GM12878 (cell line): ENCODE measurements at regions of chr3 and their contacts with region 1.

Region 1: GRCh38 chr3:111691293-111691909 is 96.3 kb upstream of the ZBED2 start:
- DNase-seq: no peak
- ATAC-seq: peak; percentile 63
- H3K4me3 ChIP-seq: no peak overlapping the region
- H3K27ac ChIP-seq: no peak overlapping the region
- H3K4me1 ChIP-seq: peaks cover 6% of the 10 kb centered on the region; the same call in 1 of the 2 replicates
- H3K27me3 ChIP-seq: no peaks in the 10 kb centered on the region
- CTCF ChIP-seq: peak; percentile 24 to 44 (median 31); a peak in 4 of 6 replicates
- EP300 ChIP-seq: no peak
- POLR2A ChIP-seq: no peak
- RAD21 ChIP-seq: peak; percentile 52

Region 2: GRCh38 chr3:111676211-111677006 is 15.0 kb before region 1 on chr3:
- CTCF ChIA-PET with region 1: interaction called, 15 read pairs
- POLR2A ChIA-PET with region 1: interaction called, 4 read pairs
- RAD21 ChIA-PET with region 1: interaction called, 112 read pairs
- SMC1A ChIA-PET with region 1: interaction called, 29 read pairs
- in situ Hi-C with region 1: no loop called
- intact Hi-C with region 1: no loop called
- DNase-seq: no peak
- ATAC-seq: peak; percentile 38
- H3K4me3 ChIP-seq: peak overlapping the region; percentile 67; the same call in 1 of the 2 replicates
- H3K27ac ChIP-seq: no peak overlapping the region
- H3K4me1 ChIP-seq: peaks cover 17% of the 10 kb centered on the region
- H3K27me3 ChIP-seq: no peaks in the 10 kb centered on the region
- CTCF ChIP-seq: no peak
- EP300 ChIP-seq: no peak
- POLR2A ChIP-seq: no peak
- RAD21 ChIP-seq: no peak

Region 3: GRCh38 chr3:111708157-111708771 is 16.9 kb after region 1 on chr3:
- CTCF ChIA-PET with region 1: interaction called, 27 read pairs
- POLR2A ChIA-PET with region 1: no interaction called
- RAD21 ChIA-PET with region 1: interaction called, 3 read pairs
- SMC1A ChIA-PET with region 1: interaction called, 59 read pairs
- in situ Hi-C with region 1: no loop called
- intact Hi-C with region 1: no loop called
- DNase-seq: no peak
- ATAC-seq: no peak
- H3K4me3 ChIP-seq: no peak overlapping the region
- H3K27ac ChIP-seq: no peak overlapping the region
- H3K4me1 ChIP-seq: no peaks in the 10 kb centered on the region
- H3K27me3 ChIP-seq: no peaks in the 10 kb centered on the region
- CTCF ChIP-seq: no peak
- EP300 ChIP-seq: no peak
- POLR2A ChIP-seq: no peak
- RAD21 ChIP-seq: no peak

Region 4: DNA sequence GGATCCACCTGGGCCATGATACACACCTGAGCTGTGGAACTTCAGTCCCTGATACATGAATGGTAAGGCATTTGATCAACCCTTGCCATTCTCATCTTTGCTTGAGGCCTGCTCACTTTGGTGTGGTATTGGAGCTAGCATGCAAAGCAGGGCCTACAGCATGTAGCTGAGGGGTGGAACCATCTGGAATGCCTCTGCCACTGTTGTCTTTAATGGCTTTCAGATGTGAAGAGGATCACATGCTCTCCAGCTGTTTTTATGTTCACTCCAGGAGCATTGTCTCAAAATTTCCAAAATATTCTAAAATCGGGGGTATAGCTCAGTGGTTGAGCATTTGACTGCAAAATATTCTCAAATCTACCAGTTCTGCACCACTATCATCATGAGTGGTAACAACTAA is 103.3 kb after region 1 on chr3:
- CTCF ChIA-PET with region 1: no interaction called
- POLR2A ChIA-PET with region 1: no interaction called
- RAD21 ChIA-PET with region 1: no interaction called
- SMC1A ChIA-PET with region 1: no interaction called
- in situ Hi-C with region 1: no loop called
- intact Hi-C with region 1: no loop called
- DNase-seq: no peak
- ATAC-seq: no peak
- H3K4me3 ChIP-seq: no peak overlapping the region
- H3K27ac ChIP-seq: no peak overlapping the region
- H3K4me1 ChIP-seq: no peaks in the 10 kb centered on the region
- H3K27me3 ChIP-seq: no peaks in the 10 kb centered on the region
- CTCF ChIP-seq: no peak
- EP300 ChIP-seq: no peak
- POLR2A ChIP-seq: no peak
- RAD21 ChIP-seq: no peak